CD4-positive, alpha-beta T cell (primary cell): ENCODE measurements at regions of chr1 and their contacts with region 1.

Region 1: GRCh38 chr1:53413175-53414001 is 45.8 kb upstream of the DMRTB1 start:
- DNase-seq: peak; percentile 13 to 85 (median 52)
- ATAC-seq: peak; percentile 77
- H3K4me3 ChIP-seq: no peak overlapping the region
- H3K4me3 Mint-ChIP-seq: peak overlapping the region; percentile 31
- H3K27ac ChIP-seq: peak overlapping the region; percentile 62 to 91
- H3K27ac Mint-ChIP-seq: peak overlapping the region; percentile 90
- H3K4me1 ChIP-seq: peaks cover 66% of the 10 kb centered on the region
- H3K4me1 Mint-ChIP-seq: peaks cover 46% of the 10 kb centered on the region
- H3K27me3 ChIP-seq: no peaks in the 10 kb centered on the region
- H3K27me3 Mint-ChIP-seq: no peaks in the 10 kb centered on the region
- CTCF ChIP-seq: no peak

Region 2: DNA sequence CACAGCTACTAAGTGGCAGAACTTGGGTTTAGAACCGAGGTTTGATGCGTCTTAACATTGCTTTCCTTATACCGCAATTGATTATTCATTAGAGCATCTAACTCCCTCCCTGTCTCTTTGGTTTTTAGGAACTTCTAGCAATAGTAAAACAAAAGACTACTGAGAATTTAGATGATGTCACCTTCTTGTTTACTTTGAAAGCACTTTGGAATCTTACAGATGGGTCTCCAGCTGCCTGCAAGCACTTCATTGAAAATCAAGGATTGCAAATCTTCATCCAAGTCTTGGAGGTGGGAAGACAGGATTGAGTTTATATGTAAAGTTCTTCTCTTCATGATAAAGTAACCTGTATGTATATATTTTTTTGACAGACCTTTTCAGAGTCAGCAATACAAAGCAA is 535.8 kb before region 1 on chr1:
- CTCF ChIA-PET with region 1: no interaction called
- POLR2A ChIA-PET with region 1: no interaction called
- intact Hi-C with region 1: no loop called
- DNase-seq: no peak
- ATAC-seq: no peak
- H3K4me3 ChIP-seq: no peak overlapping the region
- H3K4me3 Mint-ChIP-seq: no peak overlapping the region
- H3K27ac ChIP-seq: no peak overlapping the region
- H3K27ac Mint-ChIP-seq: no peak overlapping the region
- H3K4me1 ChIP-seq: no peaks in the 10 kb centered on the region
- H3K4me1 Mint-ChIP-seq: no peaks in the 10 kb centered on the region
- H3K27me3 ChIP-seq: no peaks in the 10 kb centered on the region
- H3K27me3 Mint-ChIP-seq: no peaks in the 10 kb centered on the region
- CTCF ChIP-seq: no peak

Region 3: GRCh38 chr1:53393325-53393792 is 20.0 kb before region 1 on chr1:
- CTCF ChIA-PET with region 1: interaction called, 14 read pairs
- POLR2A ChIA-PET with region 1: interaction called, 7 read pairs
- intact Hi-C with region 1: no loop called
- DNase-seq: peak; percentile 41 to 85 (median 64)
- ATAC-seq: peak; percentile 62
- H3K4me3 ChIP-seq: no peak overlapping the region
- H3K4me3 Mint-ChIP-seq: no peak overlapping the region
- H3K27ac ChIP-seq: no peak overlapping the region
- H3K27ac Mint-ChIP-seq: no peak overlapping the region
- H3K4me1 ChIP-seq: peaks cover 5% of the 10 kb centered on the region
- H3K4me1 Mint-ChIP-seq: no peaks in the 10 kb centered on the region
- H3K27me3 ChIP-seq: no peaks in the 10 kb centered on the region
- H3K27me3 Mint-ChIP-seq: no peaks in the 10 kb centered on the region
- CTCF ChIP-seq: peak; percentile 87

Region 4: GRCh38 chr1:53401813-53402745 is 11.3 kb before region 1 on chr1:
- CTCF ChIA-PET with region 1: no interaction called
- POLR2A ChIA-PET with region 1: interaction called, 13 read pairs
- intact Hi-C with region 1: no loop called
- DNase-seq: peak in 1 of 14 experiments; percentile 23
- ATAC-seq: no peak
- H3K4me3 ChIP-seq: no peak overlapping the region
- H3K4me3 Mint-ChIP-seq: no peak overlapping the region
- H3K27ac ChIP-seq: no peak overlapping the region
- H3K27ac Mint-ChIP-seq: no peak overlapping the region
- H3K4me1 ChIP-seq: no peaks in the 10 kb centered on the region
- H3K4me1 Mint-ChIP-seq: no peaks in the 10 kb centered on the region
- H3K27me3 ChIP-seq: no peaks in the 10 kb centered on the region
- H3K27me3 Mint-ChIP-seq: no peaks in the 10 kb centered on the region
- CTCF ChIP-seq: no peak

Region 5: DNA sequence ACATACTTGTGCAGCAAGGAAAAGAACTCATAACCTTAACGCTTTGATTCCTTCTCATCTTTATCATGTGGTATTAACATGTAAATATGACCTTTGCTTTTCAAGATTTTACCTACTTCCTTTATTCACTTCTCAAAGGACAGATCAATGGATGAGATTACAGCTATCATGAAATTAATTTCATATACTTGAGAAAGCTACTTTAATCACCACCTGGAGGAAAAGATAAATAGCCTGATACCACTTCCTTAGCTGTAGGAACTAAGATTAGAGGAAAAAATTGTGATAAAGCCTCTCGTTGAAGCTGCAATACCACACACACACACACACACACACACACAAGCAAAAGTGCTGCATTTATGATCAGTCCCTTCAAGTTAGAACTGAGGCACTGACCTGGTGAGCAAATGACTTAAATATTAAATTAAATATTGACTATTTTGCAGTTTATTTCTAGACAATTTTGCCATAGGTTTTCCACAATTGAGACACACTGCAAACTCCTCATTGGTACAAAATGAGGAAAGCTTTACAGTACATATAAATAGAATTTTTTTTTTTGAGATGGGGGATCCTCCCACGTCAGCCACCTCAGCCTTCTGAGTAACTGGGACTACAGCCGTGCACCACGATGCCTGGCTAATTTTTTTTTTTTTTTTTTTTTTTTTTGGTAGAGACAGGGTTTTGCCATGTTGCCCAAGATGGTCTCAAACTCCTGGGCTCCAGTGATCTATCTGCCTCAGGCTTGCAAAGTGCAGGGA is 18.6 kb after region 1 on chr1:
- CTCF ChIA-PET with region 1: interaction called, 3 read pairs
- POLR2A ChIA-PET with region 1: interaction called, 10 read pairs
- intact Hi-C with region 1: no loop called
- DNase-seq: no peak
- ATAC-seq: no peak
- H3K4me3 ChIP-seq: no peak overlapping the region
- H3K4me3 Mint-ChIP-seq: no peak overlapping the region
- H3K27ac ChIP-seq: no peak overlapping the region
- H3K27ac Mint-ChIP-seq: no peak overlapping the region
- H3K4me1 ChIP-seq: no peaks in the 10 kb centered on the region
- H3K4me1 Mint-ChIP-seq: peaks cover 15% of the 10 kb centered on the region
- H3K27me3 ChIP-seq: no peaks in the 10 kb centered on the region
- H3K27me3 Mint-ChIP-seq: peaks cover 9% of the 10 kb centered on the region
- CTCF ChIP-seq: no peak